ENCODE measurements at regions of chr11 and their contacts with region 1.

Region 1: GRCh38 chr11:128279866-128280265 is 307.5 kb downstream of the ETS1 start:
- DNase-seq: no peak
- CTCF ChIP-seq: no peak

Region 2: DNA sequence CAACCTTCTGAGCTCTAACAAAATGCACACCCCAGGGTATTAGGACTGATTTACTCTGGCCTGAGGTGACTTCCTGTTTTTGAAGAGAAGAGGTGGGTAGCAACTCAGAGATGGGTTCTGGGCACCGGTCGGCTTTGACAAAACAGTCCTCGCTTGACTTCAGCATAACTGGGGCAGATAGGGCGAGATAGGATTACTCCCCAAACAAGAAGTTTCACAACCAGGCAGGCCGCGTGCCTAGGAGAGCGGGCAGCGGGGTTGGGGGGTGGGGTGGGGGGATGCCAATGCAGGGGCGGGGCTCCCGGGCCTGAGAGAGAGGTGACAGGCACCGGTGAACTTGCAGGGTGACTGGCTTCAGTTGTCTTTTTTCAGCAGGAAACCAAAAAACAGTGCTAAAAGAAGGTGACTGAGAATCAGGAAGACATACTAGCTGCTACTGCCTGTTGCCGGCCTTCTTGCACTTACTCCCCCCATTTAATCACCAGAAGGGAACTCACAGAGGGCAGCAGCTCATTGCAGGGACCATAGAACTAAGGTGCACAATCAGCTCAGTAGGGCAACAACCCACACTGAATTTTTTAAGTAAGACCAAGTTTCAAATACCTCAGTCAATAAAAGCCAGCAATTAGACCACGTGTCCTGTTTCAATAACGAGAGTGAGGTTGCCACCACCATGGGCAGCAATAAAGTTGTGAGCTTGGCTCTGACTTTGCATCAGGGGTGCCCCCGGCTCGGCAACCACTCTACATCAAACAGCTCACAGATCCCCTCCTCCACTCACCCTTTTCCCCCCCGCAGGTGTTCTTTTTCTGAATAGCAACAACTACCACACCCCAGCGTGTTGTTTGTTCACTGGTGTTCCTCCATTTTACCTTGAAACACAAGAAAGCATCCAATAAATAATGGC is 344.7 kb after region 1 on chr11:
- in situ Hi-C with region 1: loop called (anchors 10 kb)
- DNase-seq: peak; percentile 67
- CTCF ChIP-seq: no peak